Gastrocnemius medialis (tissue), 4 donors: ENCODE measurements at regions of chr11 and their contacts with region 1.

Region 1: DNA sequence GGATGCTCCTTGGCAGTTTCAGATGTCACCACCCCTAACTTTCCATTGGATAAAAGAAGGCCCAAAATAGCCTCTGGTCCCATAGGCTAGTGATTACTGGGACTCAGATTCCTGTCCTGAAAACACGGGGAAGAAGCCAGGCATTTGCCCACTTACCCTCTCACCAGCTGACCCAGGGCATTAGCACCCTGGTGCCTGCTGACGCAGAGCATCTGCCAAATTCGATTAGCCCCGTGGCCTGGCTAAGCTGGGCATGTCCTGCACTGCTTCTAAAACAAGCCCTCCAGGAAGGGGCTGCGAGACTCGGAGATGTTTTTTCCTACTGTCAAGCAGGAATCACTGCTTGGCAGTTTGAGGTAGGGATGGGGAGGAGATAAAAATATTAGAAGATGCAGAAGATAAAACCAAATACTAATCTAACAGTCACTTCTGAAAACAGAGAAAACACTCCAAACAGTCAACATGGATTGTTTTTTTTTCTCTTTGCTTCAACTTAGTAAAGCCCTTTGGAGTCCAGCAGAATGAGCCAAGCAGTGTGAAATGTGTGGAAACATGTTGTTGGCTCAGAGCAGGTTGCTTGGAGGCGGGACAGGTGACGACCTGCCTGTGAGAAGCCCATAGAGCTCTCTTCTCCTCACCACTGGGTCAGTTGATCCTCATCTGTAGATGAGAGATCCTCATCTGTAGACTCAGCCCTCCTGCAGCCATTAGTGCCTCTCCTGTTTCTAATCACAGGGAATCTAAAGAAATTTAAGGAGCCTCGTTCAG is 54.0 kb downstream of the BDNF start:
- DNase-seq: peak in 1 of 2 donors; percentile 15
- ATAC-seq: peak; percentile 58 to 84
- H3K4me3 ChIP-seq: peak overlapping the region in 2 of 4 donors; percentile 9 to 22
- H3K27ac ChIP-seq: peak overlapping the region; percentile 21 to 64 (median 39)
- H3K4me1 ChIP-seq: peaks cover 4 to 17% of the 10 kb centered on the region in 2 donors
- H3K27me3 ChIP-seq: no peaks in the 10 kb centered on the region
- CTCF ChIP-seq: no peak
- POLR2A ChIP-seq: no peak

Region 2: DNA sequence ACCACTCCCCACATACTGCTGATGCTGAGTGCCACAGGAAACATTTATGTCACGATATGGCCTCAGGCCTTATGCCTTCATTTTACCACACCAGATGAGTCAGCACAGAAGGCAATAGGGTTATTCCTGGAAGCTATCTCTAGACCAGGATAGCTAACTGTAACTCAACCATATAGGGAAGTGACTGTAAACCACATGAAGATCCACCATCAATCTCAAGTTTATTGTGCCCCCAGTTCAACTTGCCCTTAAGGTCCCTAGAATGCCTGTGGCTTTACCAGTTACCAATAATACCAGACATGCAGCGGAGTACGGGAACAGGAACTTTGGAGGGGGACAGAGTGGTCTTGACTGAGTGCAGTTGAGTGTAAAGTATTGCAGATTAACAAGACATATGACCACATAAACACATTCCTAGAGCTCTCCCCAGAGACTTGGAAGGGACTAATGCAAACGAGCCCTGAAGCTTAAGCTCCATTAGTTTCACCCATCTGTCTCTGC is 280.8 kb after region 1 on chr11:
- in situ Hi-C with region 1: no loop called
- intact Hi-C with region 1: no loop called
- DNase-seq: no peak
- ATAC-seq: no peak
- H3K4me3 ChIP-seq: no peak overlapping the region
- H3K27ac ChIP-seq: no peak overlapping the region
- H3K4me1 ChIP-seq: no peaks in the 10 kb centered on the region
- H3K27me3 ChIP-seq: no peaks in the 10 kb centered on the region
- CTCF ChIP-seq: no peak
- POLR2A ChIP-seq: no peak

Region 3: GRCh38 chr11:29173660-29174062 is 1527.4 kb after region 1 on chr11:
- in situ Hi-C with region 1: no loop called
- intact Hi-C with region 1: loop called (anchors 5 kb)
- DNase-seq: no peak
- ATAC-seq: no peak
- H3K4me3 ChIP-seq: no peak overlapping the region
- H3K27ac ChIP-seq: no peak overlapping the region
- H3K4me1 ChIP-seq: no peaks in the 10 kb centered on the region
- H3K27me3 ChIP-seq: no peaks in the 10 kb centered on the region
- CTCF ChIP-seq: no peak
- POLR2A ChIP-seq: no peak